CD8-positive, alpha-beta memory T cell (primary cell): ENCODE measurements at regions of chr6 and their contacts with region 1.

Region 1: DNA sequence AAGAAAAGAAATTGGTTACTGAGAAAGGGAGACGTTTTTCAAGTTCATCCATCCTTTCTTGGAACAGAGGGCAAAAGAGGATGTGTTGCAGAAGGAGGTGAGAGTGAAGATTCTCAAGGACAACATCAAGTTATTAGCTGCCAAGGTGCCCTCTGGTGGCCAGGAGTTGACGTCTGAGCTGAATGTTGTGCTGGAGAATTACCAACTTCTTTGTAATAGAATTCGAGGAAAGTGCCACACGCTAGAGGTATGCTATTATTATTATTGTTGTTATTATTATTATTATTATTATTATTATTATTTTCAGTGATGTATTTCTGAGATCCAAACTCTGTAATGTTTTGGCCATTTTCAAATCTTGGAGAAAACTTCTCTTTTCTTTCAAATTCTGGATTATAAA is 197.0 kb downstream of the UTRN start:
- DNase-seq: peak; percentile 48 to 77 (median 49)
- H3K4me3 ChIP-seq: no peak overlapping the region
- H3K4me3 Mint-ChIP-seq: no peak overlapping the region
- H3K27ac ChIP-seq: no peak overlapping the region
- H3K27ac Mint-ChIP-seq: peak overlapping the region in 6 of 8 donors; percentile 10 to 78 (median 54)
- H3K4me1 ChIP-seq: no peaks in the 10 kb centered on the region
- H3K4me1 Mint-ChIP-seq: peaks cover 10 to 23% (median 13%) of the 10 kb centered on the region in 3 donors
- H3K27me3 ChIP-seq: no peaks in the 10 kb centered on the region
- H3K27me3 Mint-ChIP-seq: no peaks in the 10 kb centered on the region

Region 2: DNA sequence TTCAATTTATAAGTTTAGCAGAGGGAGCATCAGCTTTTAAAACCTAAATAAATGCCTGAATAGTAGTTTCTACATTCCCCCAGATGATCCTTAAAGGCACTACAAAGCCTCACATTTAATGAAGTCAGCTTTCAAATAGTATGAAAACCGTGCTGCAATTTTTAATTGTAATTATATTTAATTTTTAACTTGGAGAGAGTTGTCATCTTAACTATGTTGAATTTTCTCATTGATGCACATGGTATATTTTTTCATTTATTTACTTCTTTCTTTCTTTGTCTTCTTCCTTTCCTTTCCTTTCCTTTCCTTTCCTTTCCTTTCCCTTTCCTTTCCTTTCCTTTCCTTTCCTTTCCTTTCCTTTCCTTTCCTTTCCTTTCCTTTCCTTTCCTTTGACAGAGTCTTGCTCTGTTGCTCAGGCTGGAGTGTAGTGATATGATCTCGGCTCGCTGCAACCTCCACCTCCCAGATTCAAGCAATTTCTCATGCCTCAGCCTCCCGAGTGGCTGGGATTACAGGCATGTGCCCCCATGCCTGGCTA is 379.0 kb before region 1 on chr6:
- CTCF ChIA-PET with region 1: interaction called, 3 read pairs
- POLR2A ChIA-PET with region 1: interaction called, 10 read pairs
- DNase-seq: no peak
- H3K4me3 ChIP-seq: no peak overlapping the region
- H3K4me3 Mint-ChIP-seq: no peak overlapping the region
- H3K27ac ChIP-seq: no peak overlapping the region
- H3K27ac Mint-ChIP-seq: no peak overlapping the region
- H3K4me1 ChIP-seq: no peaks in the 10 kb centered on the region
- H3K4me1 Mint-ChIP-seq: peaks cover 0 to 6% (median 3%) of the 10 kb centered on the region in 3 donors
- H3K27me3 ChIP-seq: no peaks in the 10 kb centered on the region
- H3K27me3 Mint-ChIP-seq: no peaks in the 10 kb centered on the region

Region 3: DNA sequence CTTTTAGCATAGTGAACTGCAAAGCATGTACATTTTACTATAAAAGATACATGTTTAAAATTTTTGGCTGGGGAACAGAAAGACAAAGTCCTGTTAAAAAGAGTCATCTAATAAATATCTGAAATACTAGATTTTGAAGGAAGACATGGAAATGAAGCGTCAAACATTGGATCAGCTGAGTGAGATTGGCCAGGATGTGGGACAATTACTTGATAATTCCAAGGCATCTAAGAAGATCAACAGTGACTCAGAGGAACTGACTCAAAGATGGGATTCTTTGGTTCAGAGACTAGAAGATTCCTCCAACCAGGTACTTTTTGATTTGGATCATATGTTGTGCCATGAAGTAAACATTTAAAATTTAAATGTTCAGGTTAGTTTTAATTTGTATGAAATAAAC is 34.7 kb before region 1 on chr6:
- CTCF ChIA-PET with region 1: no interaction called
- POLR2A ChIA-PET with region 1: no interaction called
- DNase-seq: no peak
- H3K4me3 ChIP-seq: no peak overlapping the region
- H3K4me3 Mint-ChIP-seq: no peak overlapping the region
- H3K27ac ChIP-seq: no peak overlapping the region
- H3K27ac Mint-ChIP-seq: peak overlapping the region in 4 of 8 donors; percentile 8 to 65 (median 26)
- H3K4me1 ChIP-seq: no peaks in the 10 kb centered on the region
- H3K4me1 Mint-ChIP-seq: peaks cover 1 to 3% (median 1%) of the 10 kb centered on the region in 3 donors
- H3K27me3 ChIP-seq: no peaks in the 10 kb centered on the region
- H3K27me3 Mint-ChIP-seq: no peaks in the 10 kb centered on the region

Region 4: GRCh38 chr6:144493035-144493910 is 11.1 kb after region 1 on chr6:
- CTCF ChIA-PET with region 1: no interaction called
- POLR2A ChIA-PET with region 1: no interaction called
- DNase-seq: no peak
- H3K4me3 ChIP-seq: no peak overlapping the region
- H3K4me3 Mint-ChIP-seq: no peak overlapping the region
- H3K27ac ChIP-seq: no peak overlapping the region
- H3K27ac Mint-ChIP-seq: peak overlapping the region in 1 of 8 donors; percentile 41
- H3K4me1 ChIP-seq: no peaks in the 10 kb centered on the region
- H3K4me1 Mint-ChIP-seq: peaks cover 14 to 17% (median 16%) of the 10 kb centered on the region in 3 donors
- H3K27me3 ChIP-seq: no peaks in the 10 kb centered on the region
- H3K27me3 Mint-ChIP-seq: no peaks in the 10 kb centered on the region